ENCODE measurements at regions of chr16 and their contacts with region 1.

Region 1: GRCh38 chr16:3129137-3130131 is 5.4 kb upstream of the ZNF213 start:
- DNase-seq: peak; percentile 94
- H3K4me3 Mint-ChIP-seq: peak overlapping the region; percentile 88
- H3K27ac Mint-ChIP-seq: peak overlapping the region; percentile 85
- H3K4me1 Mint-ChIP-seq: peaks cover 63% of the 10 kb centered on the region
- H3K27me3 Mint-ChIP-seq: no peaks in the 10 kb centered on the region

Region 2: GRCh38 chr16:2926650-2927646 is 202.5 kb before region 1 on chr16:
- CTCF ChIA-PET with region 1: no interaction called
- POLR2A ChIA-PET with region 1: no interaction called
- DNase-seq: peak; percentile 92
- H3K4me3 Mint-ChIP-seq: no peak overlapping the region
- H3K27ac Mint-ChIP-seq: peak overlapping the region; percentile 37
- H3K4me1 Mint-ChIP-seq: peaks cover 17% of the 10 kb centered on the region
- H3K27me3 Mint-ChIP-seq: no peaks in the 10 kb centered on the region

Region 3: DNA sequence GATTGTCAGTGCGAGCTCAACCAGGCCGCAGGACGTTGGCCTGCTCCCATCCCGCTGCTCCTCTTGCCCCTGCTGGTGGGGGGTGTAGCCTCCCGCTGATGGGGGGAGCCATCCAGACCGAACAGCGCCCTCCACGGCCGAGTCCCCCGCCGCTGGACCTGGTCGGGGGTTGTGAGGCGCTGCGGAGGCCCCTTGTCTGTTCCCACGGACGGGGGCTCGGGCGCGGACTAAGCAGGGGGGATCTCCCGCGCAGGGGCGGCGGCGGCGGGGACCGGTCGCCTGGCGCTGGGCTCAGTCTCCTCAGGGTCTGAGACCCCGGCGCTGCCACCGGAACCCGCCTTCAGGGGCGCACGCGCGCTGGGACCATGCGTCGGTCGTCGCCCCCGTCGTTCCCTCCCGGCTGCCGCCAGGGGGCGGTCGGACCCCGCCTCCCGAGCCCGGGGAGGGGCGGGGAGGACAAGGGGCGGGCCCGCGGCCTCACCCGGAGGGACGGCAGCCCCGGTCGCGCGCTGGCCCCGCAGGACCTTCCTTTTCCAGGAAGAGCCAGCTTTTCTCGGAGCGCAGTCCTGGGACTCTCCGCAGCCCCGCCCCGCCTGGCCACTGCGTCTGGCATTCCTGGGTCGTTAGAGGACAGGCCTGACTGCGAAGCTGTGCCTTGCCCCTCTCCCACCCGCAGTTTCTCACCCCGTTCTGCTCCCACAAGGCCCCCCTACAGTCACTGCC is 70.3 kb before region 1 on chr16:
- CTCF ChIA-PET with region 1: interaction called, 67 read pairs
- POLR2A ChIA-PET with region 1: interaction called, 11 read pairs
- DNase-seq: peak; percentile 86
- H3K4me3 Mint-ChIP-seq: peak overlapping the region; percentile 93
- H3K27ac Mint-ChIP-seq: peak overlapping the region; percentile 91
- H3K4me1 Mint-ChIP-seq: peaks cover 72% of the 10 kb centered on the region
- H3K27me3 Mint-ChIP-seq: no peaks in the 10 kb centered on the region

Region 4: DNA sequence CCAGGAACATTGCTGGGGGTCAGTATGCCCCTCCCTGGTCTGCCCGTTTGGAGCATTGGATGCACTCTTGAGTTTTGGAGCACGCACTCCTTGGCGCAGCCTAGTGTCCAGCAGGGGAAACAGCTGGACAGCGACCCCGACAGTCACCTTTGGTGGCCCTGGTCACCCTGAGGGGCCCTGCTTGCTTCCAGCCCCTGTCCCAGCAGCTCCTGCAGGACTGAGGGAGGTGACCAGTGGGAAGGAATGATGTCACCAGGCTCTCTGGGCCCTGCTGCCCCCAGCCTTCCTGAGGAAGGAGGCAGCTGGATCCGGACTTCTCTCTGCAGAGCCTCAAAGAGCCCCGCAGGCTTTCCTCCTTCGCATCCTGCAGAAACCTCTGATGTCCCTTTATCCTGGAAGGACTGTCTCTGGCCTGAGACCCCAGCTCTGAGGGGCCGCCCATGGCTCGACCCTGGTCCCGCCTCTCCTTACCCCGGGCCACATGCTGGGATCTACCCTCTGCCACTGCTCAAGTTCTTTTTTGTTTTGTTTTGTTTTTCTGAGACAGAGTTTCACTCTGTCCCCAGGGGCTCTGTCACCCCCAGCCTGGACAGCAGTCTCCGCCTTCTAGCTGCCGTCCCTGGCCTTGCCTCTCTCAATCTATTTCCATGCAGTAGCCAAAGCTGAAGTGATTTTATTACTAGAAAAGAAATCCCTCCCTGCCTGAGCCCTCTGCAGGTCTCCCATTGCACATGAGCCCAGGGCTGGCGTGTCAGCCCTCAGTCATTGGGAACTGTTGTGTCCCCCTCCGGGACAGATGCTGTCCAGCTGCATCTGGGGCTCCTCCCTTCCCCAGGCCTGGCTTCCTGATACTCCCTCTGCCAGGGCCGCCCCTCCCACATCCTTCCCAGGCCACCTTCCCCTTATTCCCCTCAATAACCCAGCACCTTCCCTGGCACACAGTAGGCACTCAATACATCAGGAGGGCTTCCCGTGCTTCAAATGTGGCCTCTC is 41.9 kb before region 1 on chr16:
- CTCF ChIA-PET with region 1: interaction called, 11 read pairs
- POLR2A ChIA-PET with region 1: no interaction called
- DNase-seq: no peak
- H3K4me3 Mint-ChIP-seq: peak overlapping the region; percentile 69
- H3K27ac Mint-ChIP-seq: peak overlapping the region; percentile 89
- H3K4me1 Mint-ChIP-seq: peaks cover 64% of the 10 kb centered on the region
- H3K27me3 Mint-ChIP-seq: no peaks in the 10 kb centered on the region

Region 5: GRCh38 chr16:3106205-3106928 is 23.1 kb before region 1 on chr16:
- CTCF ChIA-PET with region 1: interaction called, 28 read pairs
- POLR2A ChIA-PET with region 1: interaction called, 3 read pairs
- DNase-seq: peak; percentile 89
- H3K4me3 Mint-ChIP-seq: peak overlapping the region; percentile 79
- H3K27ac Mint-ChIP-seq: peak overlapping the region; percentile 86
- H3K4me1 Mint-ChIP-seq: peaks cover 39% of the 10 kb centered on the region
- H3K27me3 Mint-ChIP-seq: no peaks in the 10 kb centered on the region

Region 6: DNA sequence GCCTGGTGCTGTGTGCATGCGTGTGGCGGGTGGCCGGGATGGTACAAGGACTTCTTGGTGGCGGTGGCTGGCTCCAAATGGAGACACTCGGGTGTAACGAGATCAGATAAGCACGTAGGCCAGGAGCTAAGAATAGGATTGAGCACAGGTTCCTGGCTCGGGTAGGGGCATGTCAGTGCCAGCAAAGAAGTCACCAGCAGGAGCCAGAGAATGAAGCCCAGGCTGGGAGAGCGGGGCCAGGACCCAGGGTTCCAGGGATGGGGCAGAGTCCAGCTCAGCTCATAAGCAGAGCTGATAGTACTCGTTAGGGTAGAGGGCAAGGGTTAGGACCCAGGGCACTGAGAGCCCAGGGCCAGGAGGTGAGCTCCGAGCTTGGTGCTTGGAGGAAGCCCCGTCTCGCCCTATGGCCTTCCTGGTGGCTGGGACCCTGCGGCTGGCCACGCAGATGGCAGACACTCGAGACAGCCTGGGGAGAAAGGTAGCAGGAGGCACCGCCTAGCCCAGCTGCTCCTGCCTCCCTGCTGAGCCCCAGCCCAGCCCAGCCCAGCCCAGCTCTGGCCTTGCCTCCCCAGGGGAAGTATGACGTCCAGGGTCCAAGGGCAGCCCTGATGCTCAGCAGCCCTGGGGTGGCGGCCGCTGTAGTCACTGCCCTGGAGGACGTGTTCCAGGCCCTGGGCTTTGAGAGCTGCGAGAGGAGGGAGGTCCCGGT is 14.3 kb after region 1 on chr16:
- CTCF ChIA-PET with region 1: interaction called, 153 read pairs
- POLR2A ChIA-PET with region 1: no interaction called
- DNase-seq: no peak
- H3K4me3 Mint-ChIP-seq: no peak overlapping the region
- H3K27ac Mint-ChIP-seq: no peak overlapping the region
- H3K4me1 Mint-ChIP-seq: no peaks in the 10 kb centered on the region
- H3K27me3 Mint-ChIP-seq: no peaks in the 10 kb centered on the region